Activated CD4-positive, alpha-beta memory T cell treated with anti-CD3 and anti-CD28 coated beads for 36 hours (primary cell): ENCODE measurements at regions of chr17 and their contacts with region 1.

Region 1: DNA sequence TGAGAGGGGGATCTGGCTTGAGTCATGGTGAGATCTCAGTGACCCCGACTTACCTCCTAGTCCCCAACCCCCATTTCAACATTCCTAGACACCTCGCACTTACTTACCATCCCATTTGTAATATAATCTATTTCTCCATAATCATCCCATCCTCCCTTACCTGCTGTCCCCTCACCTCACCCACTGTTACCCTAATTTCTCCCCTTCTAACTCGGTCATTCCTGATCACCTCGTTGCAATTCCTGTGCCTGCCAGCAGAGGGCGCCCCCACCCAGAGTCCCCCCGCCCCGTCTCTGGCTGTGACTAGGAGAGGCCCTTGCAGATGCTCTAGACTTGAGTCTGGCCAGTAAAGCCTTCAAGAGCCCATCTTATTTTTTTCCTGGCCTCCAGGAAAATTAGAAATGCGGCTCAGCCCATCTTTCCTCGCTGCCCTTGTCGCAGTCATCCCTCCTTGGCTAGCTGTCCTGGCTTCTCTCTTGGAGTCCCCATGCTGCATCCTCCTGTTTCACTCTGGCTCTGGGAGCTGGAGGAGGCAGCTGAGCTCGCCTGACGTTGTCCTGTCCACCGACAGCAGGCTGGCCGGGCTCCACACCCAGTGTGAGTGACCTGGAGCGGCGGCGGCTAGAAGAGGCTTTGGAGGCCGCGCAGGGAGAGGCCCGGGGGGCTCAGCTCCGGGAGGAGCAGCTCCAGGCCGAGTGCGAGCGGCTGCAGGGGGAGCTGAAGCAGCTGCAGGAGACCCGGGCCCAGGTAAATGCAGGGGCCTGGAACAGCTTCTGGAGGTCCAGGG is 5.0 kb downstream of the TBKBP1 start:
- DNase-seq: peak; percentile 92
- H3K4me3 Mint-ChIP-seq: no peak overlapping the region
- H3K27ac Mint-ChIP-seq: peak overlapping the region; percentile 65
- H3K4me1 Mint-ChIP-seq: peaks cover 60% of the 10 kb centered on the region
- H3K27me3 Mint-ChIP-seq: no peaks in the 10 kb centered on the region

Region 2: GRCh38 chr17:47649153-47649971 is 49.6 kb before region 1 on chr17 and contains the start of gene KPNB1:
- CTCF ChIA-PET with region 1: interaction called, 5 read pairs
- POLR2A ChIA-PET with region 1: interaction called, 6 read pairs
- intact Hi-C with region 1: loop called (anchors 2 kb)
- DNase-seq: peak; percentile 100
- H3K4me3 Mint-ChIP-seq: peak within 1 kb of the TSS; percentile 92
- H3K27ac Mint-ChIP-seq: peak within 1 kb of the TSS; percentile 98
- H3K4me1 Mint-ChIP-seq: peaks cover 44% of the 10 kb centered on the region
- H3K27me3 Mint-ChIP-seq: no peaks in the 10 kb centered on the region
- total RNA-seq, gene KPNB1: 475 to 488 TPM

Region 3: GRCh38 chr17:47708863-47709541 is 10.1 kb after region 1 on chr17:
- CTCF ChIA-PET with region 1: interaction called, 135 read pairs
- POLR2A ChIA-PET with region 1: interaction called, 111 read pairs
- intact Hi-C with region 1: no loop called
- DNase-seq: no peak
- H3K4me3 Mint-ChIP-seq: no peak overlapping the region
- H3K27ac Mint-ChIP-seq: no peak overlapping the region
- H3K4me1 Mint-ChIP-seq: peaks cover 62% of the 10 kb centered on the region
- H3K27me3 Mint-ChIP-seq: no peaks in the 10 kb centered on the region

Region 4: GRCh38 chr17:47733047-47733673 is 34.2 kb after region 1 on chr17 and contains the start of gene TBX21:
- CTCF ChIA-PET with region 1: interaction called, 175 read pairs
- POLR2A ChIA-PET with region 1: interaction called, 29 read pairs
- intact Hi-C with region 1: loop called (anchors 1 kb)
- DNase-seq: peak; percentile 94
- H3K4me3 Mint-ChIP-seq: peak within 1 kb of the TSS; percentile 100
- H3K27ac Mint-ChIP-seq: peak within 1 kb of the TSS; percentile 93
- H3K4me1 Mint-ChIP-seq: peaks cover 69% of the 10 kb centered on the region
- H3K27me3 Mint-ChIP-seq: no peaks in the 10 kb centered on the region
- total RNA-seq, gene TBX21: 57.7 to 58.2 TPM

Region 5: DNA sequence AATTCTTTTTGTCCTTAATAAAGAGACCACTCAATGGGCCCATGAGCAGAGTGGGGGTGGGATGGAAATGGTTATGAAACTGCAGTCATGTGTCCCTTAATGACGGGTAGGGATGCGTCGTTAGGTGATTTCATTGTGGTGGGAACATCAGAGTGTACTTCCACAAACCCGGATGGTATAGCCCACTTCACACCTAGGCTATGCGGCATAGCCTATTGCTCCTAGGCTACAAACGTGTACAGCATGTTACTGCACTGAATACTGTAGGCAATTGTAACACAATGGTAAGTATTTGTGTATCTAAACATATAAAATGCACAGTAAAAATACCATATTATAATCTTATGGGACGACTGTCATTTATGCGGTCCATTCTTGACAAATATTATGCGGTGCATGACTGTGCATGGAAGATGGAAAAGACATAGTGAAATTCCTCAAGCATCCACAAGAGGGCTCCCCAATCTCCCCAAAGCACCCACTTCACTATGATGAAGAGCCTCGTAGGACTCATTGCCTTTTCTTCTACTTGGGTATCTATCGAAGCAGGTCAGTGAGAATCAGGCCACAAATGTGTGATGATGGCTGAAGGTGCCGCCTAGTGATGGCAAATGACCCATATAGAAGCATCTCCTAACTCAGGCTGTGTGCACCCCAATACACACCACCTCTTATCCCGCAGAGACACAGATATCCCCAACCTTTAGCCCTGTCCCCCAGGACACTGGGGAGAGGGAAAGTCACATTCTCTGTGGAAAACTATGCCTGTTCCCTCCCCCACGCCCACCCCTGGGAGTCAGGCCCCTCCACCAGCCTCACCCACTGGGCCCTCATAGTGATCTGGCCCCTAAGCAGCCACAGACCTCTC is 77.6 kb after region 1 on chr17:
- CTCF ChIA-PET with region 1: interaction called, 10 read pairs
- POLR2A ChIA-PET with region 1: no interaction called
- intact Hi-C with region 1: no loop called
- DNase-seq: peak; percentile 45
- H3K4me3 Mint-ChIP-seq: no peak overlapping the region
- H3K27ac Mint-ChIP-seq: no peak overlapping the region
- H3K4me1 Mint-ChIP-seq: no peaks in the 10 kb centered on the region
- H3K27me3 Mint-ChIP-seq: peaks cover 44% of the 10 kb centered on the region

Region 6: GRCh38 chr17:47802341-47803022 is 103.5 kb after region 1 on chr17:
- CTCF ChIA-PET with region 1: interaction called, 13 read pairs
- POLR2A ChIA-PET with region 1: no interaction called
- intact Hi-C with region 1: loop called (anchors 5 kb)
- DNase-seq: peak; percentile 71
- H3K4me3 Mint-ChIP-seq: no peak overlapping the region
- H3K27ac Mint-ChIP-seq: no peak overlapping the region
- H3K4me1 Mint-ChIP-seq: no peaks in the 10 kb centered on the region
- H3K27me3 Mint-ChIP-seq: no peaks in the 10 kb centered on the region

Region 7: DNA sequence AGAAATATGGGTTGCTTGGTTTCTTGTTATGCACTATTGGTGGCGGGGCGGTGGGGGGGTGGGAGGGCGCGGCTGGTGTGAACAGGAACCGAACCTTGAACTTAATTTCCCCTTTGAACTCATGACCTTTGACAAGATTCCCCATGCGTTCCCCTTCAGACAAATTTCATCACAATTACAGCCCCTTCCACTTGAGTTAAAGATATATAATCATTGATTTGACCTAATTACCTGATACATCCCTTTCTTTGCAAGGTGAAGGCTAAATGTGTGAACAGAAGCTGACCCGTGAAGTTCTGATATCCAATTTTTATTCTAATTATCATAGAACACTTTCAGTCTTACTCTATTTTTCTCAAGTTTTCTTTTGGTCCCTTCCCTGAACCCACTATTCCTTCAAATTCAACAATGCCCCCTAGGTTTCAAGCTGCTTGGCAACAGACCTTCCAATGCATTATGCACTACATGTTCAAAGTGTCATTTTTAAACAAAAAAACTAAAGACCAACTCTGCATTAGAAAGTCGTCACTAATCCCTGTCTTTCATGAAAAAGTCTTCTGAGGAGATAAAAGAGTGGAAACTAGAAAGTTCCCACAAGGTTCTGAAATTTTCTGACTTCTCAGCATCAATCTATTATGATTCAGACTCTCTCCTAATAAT is 614.3 kb after region 1 on chr17:
- CTCF ChIA-PET with region 1: no interaction called
- POLR2A ChIA-PET with region 1: no interaction called
- intact Hi-C with region 1: no loop called
- DNase-seq: no peak
- H3K4me3 Mint-ChIP-seq: no peak overlapping the region
- H3K27ac Mint-ChIP-seq: no peak overlapping the region
- H3K4me1 Mint-ChIP-seq: peaks cover 21% of the 10 kb centered on the region
- H3K27me3 Mint-ChIP-seq: no peaks in the 10 kb centered on the region